Activated T-helper 2 cell treated with anti-CD3 and anti-CD28 coated beads, Interferon-gamma antibody, Interleukin-2, Interleukin-4, amounts not matched to agents 10 μg/mL and 5 μg/mL and 100 μg/mL, durations not matched to agents 14 hours and 24 hours and 36 hours (primary cell): ENCODE measurements at regions of chr14 and their contacts with region 1.

Region 1: GRCh38 chr14:61452452-61452851 is 131.1 kb downstream of the PRKCH start:
- DNase-seq: peak; percentile 71
- H3K4me3 Mint-ChIP-seq: peak overlapping the region; percentile 54
- H3K27ac Mint-ChIP-seq: peak overlapping the region; percentile 99
- H3K4me1 Mint-ChIP-seq: peaks cover 88% of the 10 kb centered on the region
- H3K27me3 Mint-ChIP-seq: no peaks in the 10 kb centered on the region

Region 2: GRCh38 chr14:61280526-61281185 is 171.8 kb before region 1 on chr14:
- intact Hi-C with region 1: loop called (anchors 5 kb)
- DNase-seq: peak; percentile 65
- H3K4me3 Mint-ChIP-seq: peak overlapping the region; percentile 81
- H3K27ac Mint-ChIP-seq: peak overlapping the region; percentile 59
- H3K4me1 Mint-ChIP-seq: peaks cover 21% of the 10 kb centered on the region
- H3K27me3 Mint-ChIP-seq: peaks cover 42% of the 10 kb centered on the region

Region 3: DNA sequence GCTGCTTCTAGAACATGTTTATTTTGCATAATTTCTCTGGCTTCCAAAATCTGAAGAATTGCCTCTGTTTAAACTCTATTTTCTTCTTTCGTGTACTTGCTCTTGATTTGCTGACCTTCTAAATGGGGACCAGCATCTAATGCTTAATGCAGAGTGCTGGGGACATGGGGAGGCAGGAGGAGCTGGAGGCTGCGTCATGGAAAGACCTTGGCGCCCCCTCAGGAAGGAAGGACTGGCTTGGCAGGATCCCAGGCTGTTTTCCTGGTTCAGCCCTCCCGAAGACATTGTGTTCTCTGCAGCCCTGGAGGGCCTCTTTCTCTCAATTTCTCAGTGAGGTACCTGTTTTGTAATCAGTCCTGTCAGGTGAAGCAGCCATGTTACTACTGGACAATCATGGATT is 125.6 kb before region 1 on chr14:
- intact Hi-C with region 1: loop called (anchors 1 kb)
- DNase-seq: no peak
- H3K4me3 Mint-ChIP-seq: peak overlapping the region; percentile 76
- H3K27ac Mint-ChIP-seq: peak overlapping the region; percentile 86
- H3K4me1 Mint-ChIP-seq: peaks cover 61% of the 10 kb centered on the region
- H3K27me3 Mint-ChIP-seq: no peaks in the 10 kb centered on the region

Region 4: GRCh38 chr14:61347826-61348443 is 104.5 kb before region 1 on chr14:
- intact Hi-C with region 1: loop called (anchors 1 kb)
- DNase-seq: no peak
- H3K4me3 Mint-ChIP-seq: peak overlapping the region; percentile 73
- H3K27ac Mint-ChIP-seq: peak overlapping the region; percentile 93
- H3K4me1 Mint-ChIP-seq: peaks cover 86% of the 10 kb centered on the region
- H3K27me3 Mint-ChIP-seq: no peaks in the 10 kb centered on the region

Region 5: GRCh38 chr14:61406198-61406597 is 46.3 kb before region 1 on chr14:
- intact Hi-C with region 1: loop called (anchors 5 kb)
- DNase-seq: no peak
- H3K4me3 Mint-ChIP-seq: no peak overlapping the region
- H3K27ac Mint-ChIP-seq: peak overlapping the region; percentile 18
- H3K4me1 Mint-ChIP-seq: peaks cover 62% of the 10 kb centered on the region
- H3K27me3 Mint-ChIP-seq: no peaks in the 10 kb centered on the region